B cell (primary cell): ENCODE measurements at regions of chr3 and their contacts with region 1.

Region 1: GRCh38 chr3:183635431-183636220 is at the start of gene KLHL24:
- DNase-seq: peak; percentile 93
- ATAC-seq: peak; percentile 71
- H3K4me3 ChIP-seq: peak within 1 kb of the TSS; percentile 77 to 98 (median 91)
- H3K4me3 Mint-ChIP-seq: peak within 1 kb of the TSS; percentile 88
- H3K27ac ChIP-seq: peak within 1 kb of the TSS; percentile 96 to 99
- H3K27ac Mint-ChIP-seq: peak within 1 kb of the TSS; percentile 90
- H3K4me1 ChIP-seq: peaks cover 18 to 25% of the 10 kb centered on the region in 2 donors
- H3K4me1 Mint-ChIP-seq: peaks cover 28% of the 10 kb centered on the region
- H3K27me3 ChIP-seq: no peaks in the 10 kb centered on the region
- H3K27me3 Mint-ChIP-seq: no peaks in the 10 kb centered on the region
- CTCF ChIP-seq: no peak
- total RNA-seq, gene KLHL24: 134 and 139 TPM in 2 replicates

Region 2: DNA sequence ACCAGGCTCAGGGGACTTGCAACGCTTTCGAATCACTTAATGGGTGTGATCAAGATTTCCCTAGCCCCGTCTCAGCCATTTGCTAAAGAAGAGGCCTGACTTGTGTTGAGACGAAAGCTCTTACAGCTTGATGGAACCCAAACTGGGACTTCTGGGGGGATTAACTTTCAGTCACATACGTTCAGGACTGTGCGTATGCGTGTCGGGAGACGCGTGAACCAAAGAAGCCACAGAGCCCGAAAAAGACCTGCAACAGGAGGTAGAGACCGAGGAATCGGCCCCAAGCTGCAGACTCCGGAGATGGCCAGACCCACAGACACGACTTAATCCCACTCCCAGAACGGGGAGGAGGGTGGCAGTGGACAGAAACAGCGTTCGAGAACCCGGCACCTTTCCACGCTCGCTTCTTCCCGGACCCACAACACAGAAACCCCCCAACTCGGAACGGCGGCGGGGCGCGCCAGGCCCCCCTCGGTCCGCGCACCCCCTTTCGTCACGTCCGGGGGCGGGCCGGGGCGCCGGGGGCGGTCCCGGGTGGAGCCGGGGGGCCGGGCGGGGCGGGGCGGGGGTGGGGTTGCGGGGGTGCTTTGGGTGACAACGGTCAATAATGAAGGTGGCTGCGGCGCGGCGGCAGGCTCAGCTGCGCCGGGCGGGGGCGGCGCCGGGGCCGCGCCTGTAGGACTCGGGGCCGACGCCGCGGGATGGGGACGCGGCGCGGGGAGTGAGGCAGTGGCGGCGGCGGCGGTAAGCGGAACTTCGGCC is 842.5 kb before region 1 on chr3 and contains the start of gene ATP11B:
- CTCF ChIA-PET with region 1: interaction called, 3 read pairs
- POLR2A ChIA-PET with region 1: interaction called, 3 read pairs
- intact Hi-C with region 1: loop called (anchors 2 kb)
- DNase-seq: peak; percentile 91
- ATAC-seq: peak; percentile 79
- H3K4me3 ChIP-seq: peak within 1 kb of the TSS; percentile 78 to 99 (median 94)
- H3K4me3 Mint-ChIP-seq: peak within 1 kb of the TSS; percentile 100
- H3K27ac ChIP-seq: peak within 1 kb of the TSS; percentile 92 to 98
- H3K27ac Mint-ChIP-seq: peak within 1 kb of the TSS; percentile 100
- H3K4me1 ChIP-seq: peaks cover 34 to 40% of the 10 kb centered on the region in 2 donors
- H3K4me1 Mint-ChIP-seq: peaks cover 39% of the 10 kb centered on the region
- H3K27me3 ChIP-seq: no peaks in the 10 kb centered on the region
- H3K27me3 Mint-ChIP-seq: no peaks in the 10 kb centered on the region
- CTCF ChIP-seq: no peak
- total RNA-seq, gene ATP11B: 81.9 and 94.6 TPM in 2 replicates

Region 3: GRCh38 chr3:183468424-183468823 is 167.2 kb before region 1 on chr3:
- CTCF ChIA-PET with region 1: interaction called, 4 read pairs
- POLR2A ChIA-PET with region 1: no interaction called
- intact Hi-C with region 1: loop called (anchors 1 kb)
- DNase-seq: no peak
- ATAC-seq: no peak
- H3K4me3 ChIP-seq: no peak overlapping the region
- H3K4me3 Mint-ChIP-seq: no peak overlapping the region
- H3K27ac ChIP-seq: no peak overlapping the region
- H3K27ac Mint-ChIP-seq: no peak overlapping the region
- H3K4me1 ChIP-seq: peaks cover 0 to 7% of the 10 kb centered on the region in 2 donors
- H3K4me1 Mint-ChIP-seq: peaks cover 10% of the 10 kb centered on the region
- H3K27me3 ChIP-seq: no peaks in the 10 kb centered on the region
- H3K27me3 Mint-ChIP-seq: peaks cover 7% of the 10 kb centered on the region
- CTCF ChIP-seq: no peak

Region 4: GRCh38 chr3:183537295-183537730 is 98.3 kb before region 1 on chr3:
- CTCF ChIA-PET with region 1: no interaction called
- POLR2A ChIA-PET with region 1: no interaction called
- intact Hi-C with region 1: loop called (anchors 1 kb)
- DNase-seq: no peak
- ATAC-seq: no peak
- H3K4me3 ChIP-seq: no peak overlapping the region
- H3K4me3 Mint-ChIP-seq: peak overlapping the region; percentile 77
- H3K27ac ChIP-seq: peak overlapping the region in 1 of 2 donors; percentile 56
- H3K27ac Mint-ChIP-seq: peak overlapping the region; percentile 94
- H3K4me1 ChIP-seq: peaks cover 80 to 96% of the 10 kb centered on the region in 2 donors
- H3K4me1 Mint-ChIP-seq: peaks cover 90% of the 10 kb centered on the region
- H3K27me3 ChIP-seq: no peaks in the 10 kb centered on the region
- H3K27me3 Mint-ChIP-seq: no peaks in the 10 kb centered on the region
- CTCF ChIP-seq: no peak

Region 5: DNA sequence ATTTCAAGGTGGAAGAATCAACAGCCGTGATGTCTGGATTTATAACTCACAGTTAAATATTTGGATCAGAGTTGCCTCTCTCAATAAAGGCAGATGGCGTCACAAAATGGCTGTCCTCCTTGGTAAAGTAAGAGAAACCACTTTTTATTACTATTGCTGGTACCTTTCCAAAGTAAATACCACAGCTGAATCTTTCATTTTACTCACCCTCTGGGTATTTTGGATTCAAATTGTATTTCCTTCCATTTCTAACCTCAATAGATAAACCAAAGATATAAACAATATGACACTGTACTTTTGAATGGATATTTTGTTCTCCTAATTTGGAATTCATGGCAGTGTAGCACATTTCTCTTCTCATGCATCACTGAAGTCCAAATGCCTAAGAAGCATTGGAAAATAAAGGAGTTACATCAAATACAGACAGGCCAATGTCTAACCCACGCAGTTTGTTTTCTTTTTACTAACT is 29.3 kb after region 1 on chr3:
- CTCF ChIA-PET with region 1: no interaction called
- POLR2A ChIA-PET with region 1: no interaction called
- intact Hi-C with region 1: no loop called
- DNase-seq: no peak
- ATAC-seq: no peak
- H3K4me3 ChIP-seq: no peak overlapping the region
- H3K4me3 Mint-ChIP-seq: no peak overlapping the region
- H3K27ac ChIP-seq: no peak overlapping the region
- H3K27ac Mint-ChIP-seq: no peak overlapping the region
- H3K4me1 ChIP-seq: no peaks in the 10 kb centered on the region
- H3K4me1 Mint-ChIP-seq: peaks cover 6% of the 10 kb centered on the region
- H3K27me3 ChIP-seq: no peaks in the 10 kb centered on the region
- H3K27me3 Mint-ChIP-seq: no peaks in the 10 kb centered on the region
- CTCF ChIP-seq: no peak

Region 6: GRCh38 chr3:183697610-183698317 is 62.1 kb after region 1 on chr3 and contains the start of gene YEATS2:
- CTCF ChIA-PET with region 1: interaction called, 6 read pairs
- POLR2A ChIA-PET with region 1: interaction called, 18 read pairs
- intact Hi-C with region 1: loop called (anchors 1 kb)
- DNase-seq: peak; percentile 82
- ATAC-seq: peak; percentile 87
- H3K4me3 ChIP-seq: peak within 1 kb of the TSS; percentile 77 to 92 (median 83)
- H3K4me3 Mint-ChIP-seq: peak within 1 kb of the TSS; percentile 97
- H3K27ac ChIP-seq: peak within 1 kb of the TSS; percentile 67 to 82
- H3K27ac Mint-ChIP-seq: peak within 1 kb of the TSS; percentile 91
- H3K4me1 ChIP-seq: peaks cover 18% of the 10 kb centered on the region in 2 donors
- H3K4me1 Mint-ChIP-seq: peaks cover 32% of the 10 kb centered on the region
- H3K27me3 ChIP-seq: no peaks in the 10 kb centered on the region
- H3K27me3 Mint-ChIP-seq: no peaks in the 10 kb centered on the region
- CTCF ChIP-seq: no peak
- total RNA-seq, gene YEATS2: 26.7 and 30.6 TPM in 2 replicates